Tibial artery (tissue), 4 donors: ENCODE measurements at regions of chr22 and their contacts with region 1.

Region 1: DNA sequence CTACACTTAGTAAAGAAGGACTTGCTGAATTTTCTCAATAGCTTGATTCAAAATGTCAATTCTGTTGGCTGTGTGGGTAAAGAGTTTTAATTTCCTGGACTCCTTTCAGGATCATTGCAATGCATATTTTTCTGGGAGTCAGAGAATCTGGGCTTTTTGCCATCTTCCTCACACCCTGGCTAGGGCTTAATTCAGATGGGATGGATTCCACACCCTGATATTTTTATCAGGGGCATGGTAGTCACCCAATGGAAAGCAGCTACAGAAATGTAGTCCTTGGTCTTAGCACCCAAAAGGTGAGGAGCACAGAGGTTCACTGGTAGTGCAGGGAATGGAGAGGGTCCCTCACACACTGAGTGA is 79.3 kb downstream of the SGSM3 start:
- DNase-seq: peak in 1 of 2 donors; percentile 17
- H3K4me3 ChIP-seq: no peak overlapping the region
- H3K27ac ChIP-seq: peak overlapping the region; percentile 57 to 81
- H3K4me1 ChIP-seq: peaks cover 5 to 75% (median 47%) of the 10 kb centered on the region in 4 donors
- H3K27me3 ChIP-seq: no peaks in the 10 kb centered on the region
- CTCF ChIP-seq: no peak

Region 2: GRCh38 chr22:40281717-40282116 is 167.9 kb before region 1 on chr22:
- intact Hi-C with region 1: no loop called
- DNase-seq: no peak
- H3K4me3 ChIP-seq: no peak overlapping the region
- H3K27ac ChIP-seq: no peak overlapping the region
- H3K4me1 ChIP-seq: peaks cover 0 to 12% (median 0%) of the 10 kb centered on the region in 4 donors
- H3K27me3 ChIP-seq: no peaks in the 10 kb centered on the region
- CTCF ChIP-seq: no peak

Region 3: DNA sequence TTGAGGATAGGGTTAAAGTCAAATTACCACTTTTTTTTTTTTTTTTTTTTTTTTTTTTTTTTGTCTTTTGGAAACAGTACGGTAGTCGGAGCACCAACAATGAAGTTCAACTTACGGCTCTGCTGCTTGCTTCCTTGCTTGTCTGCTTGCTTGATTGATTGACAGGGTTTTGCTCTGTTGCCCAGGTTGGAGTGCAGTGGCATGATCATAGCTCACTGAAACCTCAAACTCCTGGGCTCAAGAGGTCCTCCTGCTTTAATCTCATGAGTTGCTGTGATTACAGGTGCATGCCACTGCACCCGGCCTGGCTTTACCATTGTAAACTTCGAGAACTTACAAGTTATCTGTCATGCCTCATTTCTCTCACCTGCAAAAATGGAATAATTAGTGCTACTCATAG is 73.5 kb before region 1 on chr22:
- intact Hi-C with region 1: no loop called
- DNase-seq: no peak
- H3K4me3 ChIP-seq: no peak overlapping the region
- H3K27ac ChIP-seq: no peak overlapping the region
- H3K4me1 ChIP-seq: peaks cover 0 to 4% (median 0%) of the 10 kb centered on the region in 4 donors
- H3K27me3 ChIP-seq: no peaks in the 10 kb centered on the region
- CTCF ChIP-seq: no peak

Region 4: DNA sequence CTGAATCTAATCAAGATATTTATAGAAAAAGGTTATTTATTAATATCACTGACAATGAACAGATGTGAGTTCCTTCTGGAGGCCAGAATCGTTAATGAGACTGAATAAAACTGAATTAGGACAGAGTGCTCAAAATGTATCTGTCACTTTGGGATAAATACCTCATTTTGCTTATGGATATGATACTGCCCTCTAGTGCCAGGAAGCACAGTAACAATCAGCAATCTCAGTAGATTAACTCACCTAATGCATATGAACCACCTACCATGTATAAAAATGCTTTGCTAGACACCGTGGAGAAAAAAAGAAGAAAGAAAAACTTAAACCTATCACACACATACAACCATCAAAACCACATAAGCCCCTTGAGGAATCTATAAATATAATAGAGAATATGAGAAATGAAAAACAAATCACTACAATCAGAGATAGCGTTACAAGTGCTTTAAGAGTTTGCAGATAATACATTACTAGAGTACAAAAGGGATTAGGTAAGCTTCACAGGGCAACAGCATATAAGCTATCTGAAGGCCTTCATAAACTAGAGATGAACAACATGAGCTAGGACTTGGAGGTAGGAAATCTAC is 38.1 kb after region 1 on chr22:
- intact Hi-C with region 1: loop called (anchors 5 kb)
- DNase-seq: no peak
- H3K4me3 ChIP-seq: no peak overlapping the region
- H3K27ac ChIP-seq: peak overlapping the region; percentile 21 to 61
- H3K4me1 ChIP-seq: peaks cover 0 to 59% (median 41%) of the 10 kb centered on the region in 4 donors
- H3K27me3 ChIP-seq: no peaks in the 10 kb centered on the region
- CTCF ChIP-seq: peak; percentile 43 to 50

Region 5: DNA sequence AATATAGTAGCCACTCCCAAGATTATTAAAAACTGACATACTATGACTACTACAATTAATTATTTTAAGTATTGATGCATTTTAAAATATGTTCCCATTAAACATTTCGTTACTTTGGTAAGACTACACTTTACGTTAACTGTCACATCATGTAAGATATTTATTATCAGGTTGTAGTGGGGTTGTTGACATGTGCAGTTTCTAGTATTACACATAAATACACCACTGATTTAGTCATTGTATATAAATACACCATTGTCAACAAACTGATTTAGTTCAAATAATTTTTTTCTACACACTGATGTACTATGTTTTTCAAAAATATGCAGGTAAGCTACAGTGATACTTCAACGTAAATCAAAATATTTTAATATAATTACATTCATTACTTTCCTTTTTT is 395.3 kb after region 1 on chr22:
- intact Hi-C with region 1: loop called (anchors 5 kb)
- DNase-seq: no peak
- H3K4me3 ChIP-seq: no peak overlapping the region
- H3K27ac ChIP-seq: no peak overlapping the region
- H3K4me1 ChIP-seq: peaks cover 0 to 5% (median 0%) of the 10 kb centered on the region in 4 donors
- H3K27me3 ChIP-seq: no peaks in the 10 kb centered on the region
- CTCF ChIP-seq: no peak